ENCODE measurements at regions of chr16 and their contacts with region 1.

Region 1: DNA sequence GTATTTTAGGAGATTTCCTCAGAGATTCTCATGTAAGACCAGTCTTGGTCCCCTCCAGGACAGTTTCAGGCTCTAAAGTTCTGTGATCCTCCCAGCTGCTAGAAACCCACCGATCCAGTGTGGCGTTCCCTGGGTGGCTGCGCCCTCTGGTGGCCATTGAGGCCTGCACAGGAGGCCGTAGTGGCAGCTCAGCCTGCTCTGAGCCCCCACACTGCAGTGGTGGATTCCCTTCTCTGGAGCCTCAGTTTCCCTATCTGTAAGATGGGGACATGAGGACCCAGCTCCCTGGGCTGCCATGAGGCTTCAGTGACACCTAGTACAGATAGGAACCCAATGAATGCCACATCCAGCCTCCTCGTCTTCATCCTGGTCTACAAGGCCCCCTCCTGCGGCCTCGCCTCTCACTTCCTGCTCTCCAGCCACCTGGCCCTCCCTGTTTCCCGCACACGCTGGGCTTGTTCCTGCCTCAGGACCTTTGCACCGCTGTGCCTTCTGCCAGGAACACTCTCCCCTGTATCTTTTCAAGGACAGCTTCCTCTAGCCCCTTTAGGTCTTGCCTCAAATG is 16.5 kb downstream of the CCDC102A start:
- DNase-seq: peak; percentile 84 to 92
- H3K4me3 ChIP-seq: no peak overlapping the region
- H3K27ac ChIP-seq: no peak overlapping the region
- H3K4me1 ChIP-seq: peaks cover 0 to 6% (median 2%) of the 10 kb centered on the region in 4 donors
- H3K27me3 ChIP-seq: no peaks in the 10 kb centered on the region
- CTCF ChIP-seq: peak in 6 of 7 experiments; percentile 8 to 95 (median 92)
- EP300 ChIP-seq: no peak
- POLR2A ChIP-seq: no peak

Region 2: DNA sequence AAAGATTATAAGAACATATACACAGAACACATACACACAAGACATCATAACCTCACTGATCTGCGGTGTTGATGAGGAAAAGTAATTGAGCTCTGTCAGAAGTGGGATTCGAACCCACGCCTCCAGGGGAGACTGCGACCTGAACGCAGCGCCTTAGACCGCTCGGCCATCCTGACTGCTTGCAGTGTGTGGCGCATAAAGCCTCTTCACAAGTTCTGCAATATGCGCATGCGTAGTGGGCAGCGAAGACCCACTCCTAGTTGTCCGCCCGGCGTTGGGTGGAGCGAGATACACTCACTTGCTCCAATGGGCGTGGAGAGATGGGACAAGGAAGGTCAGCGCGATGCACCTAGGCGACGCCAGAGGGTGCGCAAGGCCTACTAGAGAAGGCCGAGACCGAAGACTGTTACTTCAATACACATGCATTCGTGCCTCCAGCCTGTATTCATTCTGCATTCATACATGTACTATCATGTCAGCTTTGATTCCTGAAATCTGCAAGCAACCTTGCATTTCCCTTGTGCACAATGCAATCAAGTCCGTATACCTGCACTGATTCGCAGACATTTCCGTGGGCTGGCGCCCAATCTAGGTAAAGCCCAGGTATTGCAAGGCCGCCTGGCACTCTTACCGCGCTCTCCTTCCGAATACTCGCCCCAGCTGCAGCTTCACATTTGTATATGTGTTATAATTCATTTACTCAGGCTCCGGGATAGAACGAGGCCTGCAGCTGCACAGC is 219.3 kb before region 1 on chr16:
- intact Hi-C with region 1: loop called (anchors 10 kb)
- DNase-seq: peak; percentile 99 to 100
- H3K4me3 ChIP-seq: peak overlapping the region; percentile 35 to 43 (median 42)
- H3K27ac ChIP-seq: peak overlapping the region; percentile 83 to 93 (median 92)
- H3K4me1 ChIP-seq: peaks cover 25 to 53% (median 38%) of the 10 kb centered on the region in 4 donors
- H3K27me3 ChIP-seq: no peaks in the 10 kb centered on the region
- CTCF ChIP-seq: peak in 6 of 7 experiments; percentile 66 to 100 (median 94)
- EP300 ChIP-seq: no peak
- POLR2A ChIP-seq: no peak

Region 3: GRCh38 chr16:57422026-57422944 is 97.6 kb before region 1 on chr16:
- intact Hi-C with region 1: loop called (anchors 10 kb)
- DNase-seq: peak; percentile 52 to 89
- H3K4me3 ChIP-seq: no peak overlapping the region
- H3K27ac ChIP-seq: no peak overlapping the region
- H3K4me1 ChIP-seq: peaks cover 14 to 43% (median 30%) of the 10 kb centered on the region in 4 donors
- H3K27me3 ChIP-seq: no peaks in the 10 kb centered on the region
- CTCF ChIP-seq: peak in 5 of 7 experiments; percentile 49 to 73 (median 54)
- EP300 ChIP-seq: no peak
- POLR2A ChIP-seq: no peak